ENCODE measurements at regions of chr10 and their contacts with region 1.

Region 1: DNA sequence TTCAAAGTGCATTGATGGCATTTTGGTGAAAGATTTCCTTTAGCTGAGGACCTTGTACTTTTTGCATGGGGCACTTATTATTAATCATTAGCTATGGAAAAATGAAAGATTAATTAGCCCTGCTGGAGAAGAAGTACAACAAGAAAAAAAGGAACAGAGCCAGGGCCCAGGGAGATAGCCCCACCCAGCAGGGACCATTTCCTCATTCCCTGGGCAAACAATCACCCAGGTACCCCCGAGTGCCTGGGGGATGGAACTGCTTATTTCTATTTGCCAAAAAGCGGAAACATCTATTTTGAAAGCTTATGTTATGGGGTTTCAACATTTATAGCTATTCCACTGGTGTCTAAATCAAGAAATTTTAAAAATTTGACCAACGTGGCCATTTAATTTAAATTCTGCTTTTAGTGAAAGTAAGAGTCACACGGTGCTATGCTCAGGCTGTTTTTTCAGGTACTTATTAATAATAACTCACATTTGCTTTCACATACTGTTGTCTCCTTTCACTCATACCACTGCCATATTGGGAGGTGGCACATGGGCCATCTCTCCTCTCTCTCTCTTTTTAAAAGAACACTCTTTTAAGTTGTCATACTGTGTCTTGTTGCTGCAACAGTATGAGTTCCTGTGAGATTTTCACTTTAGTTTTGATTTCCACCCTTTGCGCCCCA is 143.6 kb upstream of the KIF5B start:
- DNase-seq: no peak
- ATAC-seq: no peak
- H3K4me3 ChIP-seq: no peak overlapping the region
- H3K27ac ChIP-seq: no peak overlapping the region
- H3K4me1 ChIP-seq: peaks cover 0 to 12% (median 0%) of the 10 kb centered on the region in 9 donors
- H3K27me3 ChIP-seq: no peaks in the 10 kb centered on the region
- CTCF ChIP-seq: no peak

Region 2: GRCh38 chr10:31855033-31855432 is 344.8 kb before region 1 on chr10:
- intact Hi-C with region 1: loop called in 4 of 10 experiments (anchors 5 to 10 kb)
- DNase-seq: no peak
- ATAC-seq: no peak
- H3K4me3 ChIP-seq: no peak overlapping the region
- H3K27ac ChIP-seq: no peak overlapping the region
- H3K4me1 ChIP-seq: no peaks in the 10 kb centered on the region
- H3K27me3 ChIP-seq: no peaks in the 10 kb centered on the region
- CTCF ChIP-seq: no peak